ENCODE measurements at regions of chr5 and their contacts with region 1.

Region 1: GRCh38 chr5:157743163-157744050 is at the start of gene LSM11:
- DNase-seq: peak; percentile 94
- H3K4me3 Mint-ChIP-seq: peak within 1 kb of the TSS; percentile 87
- H3K27ac Mint-ChIP-seq: peak within 1 kb of the TSS; percentile 55
- H3K4me1 Mint-ChIP-seq: peaks cover 43% of the 10 kb centered on the region
- H3K27me3 Mint-ChIP-seq: no peaks in the 10 kb centered on the region
- total RNA-seq, gene LSM11: 7.4 to 8.0 TPM

Region 2: DNA sequence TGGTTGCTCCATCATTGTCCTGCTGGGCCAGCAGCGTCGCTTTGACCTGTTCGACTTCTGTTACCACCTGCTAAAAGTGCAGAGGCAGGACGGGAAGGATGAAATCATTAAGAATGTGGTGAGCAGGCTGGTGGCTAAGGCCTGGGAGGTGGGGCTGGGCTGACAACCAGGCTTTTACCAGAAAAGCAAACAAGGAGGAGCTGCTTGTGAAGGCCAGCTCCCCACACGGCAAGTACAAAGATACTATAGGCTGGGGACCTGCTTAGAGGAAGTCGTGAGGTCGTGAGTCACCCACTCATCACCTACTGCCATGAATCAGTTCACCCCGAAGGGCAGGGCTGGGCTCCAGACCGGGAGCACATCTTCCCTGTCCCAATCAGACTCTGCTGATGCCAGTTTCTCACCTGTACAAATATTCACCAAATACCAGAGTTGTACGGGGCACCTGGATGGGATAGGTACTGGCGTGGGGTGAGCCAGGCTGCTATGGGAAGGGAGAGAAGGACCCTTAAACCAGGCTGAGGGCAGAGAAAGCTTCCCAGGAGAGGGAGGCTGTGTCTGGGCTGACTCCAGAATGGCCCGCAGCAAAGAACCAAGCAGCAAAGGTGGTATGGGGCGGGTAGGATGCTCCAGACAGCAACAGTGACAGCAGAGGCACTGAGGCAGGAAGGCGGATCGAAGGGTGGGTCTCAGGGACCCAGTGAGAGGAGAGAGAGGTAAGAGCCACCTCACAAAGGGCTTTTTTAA is 352.7 kb before region 1 on chr5:
- CTCF ChIA-PET with region 1: interaction called, 13 read pairs
- POLR2A ChIA-PET with region 1: interaction called, 4 read pairs
- intact Hi-C with region 1: no loop called
- DNase-seq: peak; percentile 91
- H3K4me3 Mint-ChIP-seq: peak overlapping the region; percentile 49
- H3K27ac Mint-ChIP-seq: peak overlapping the region; percentile 98
- H3K4me1 Mint-ChIP-seq: peaks cover 39% of the 10 kb centered on the region
- H3K27me3 Mint-ChIP-seq: no peaks in the 10 kb centered on the region

Region 3: DNA sequence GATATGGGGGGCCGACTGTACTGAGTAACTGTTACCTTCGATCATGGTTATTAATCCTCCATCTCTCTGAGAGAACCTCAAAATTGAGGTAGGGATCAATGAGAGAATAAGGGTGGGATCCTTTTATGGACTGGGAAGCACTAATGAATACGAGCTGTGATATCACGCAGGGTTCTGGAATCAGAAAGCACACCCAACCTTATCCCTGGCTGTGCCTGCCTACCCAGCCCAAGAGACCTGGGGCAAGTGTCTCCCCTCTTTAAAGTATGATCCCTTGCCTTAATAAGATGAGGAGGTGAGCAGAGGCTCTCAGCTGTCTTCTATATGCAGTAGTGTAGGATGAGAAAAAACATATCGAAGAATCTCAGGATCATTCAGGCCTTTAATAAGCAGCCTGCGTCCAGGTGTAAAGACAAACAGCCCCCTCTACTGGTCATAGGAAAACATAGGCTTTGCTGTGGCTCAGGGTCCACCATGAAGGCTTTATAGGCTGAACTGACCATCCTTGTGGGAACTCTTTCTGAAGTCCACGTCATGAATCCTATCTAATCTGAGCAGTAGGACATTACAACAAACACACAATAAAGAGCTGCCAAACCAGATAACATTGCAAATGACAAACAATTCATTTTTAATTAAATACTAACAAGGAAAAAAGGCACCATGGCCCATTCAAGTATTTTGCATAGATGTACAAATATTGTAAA is 266.6 kb before region 1 on chr5:
- CTCF ChIA-PET with region 1: interaction called, 11 read pairs
- POLR2A ChIA-PET with region 1: no interaction called
- intact Hi-C with region 1: loop called (anchors 5 kb)
- DNase-seq: peak; percentile 33
- H3K4me3 Mint-ChIP-seq: no peak overlapping the region
- H3K27ac Mint-ChIP-seq: peak overlapping the region; percentile 40
- H3K4me1 Mint-ChIP-seq: peaks cover 27% of the 10 kb centered on the region
- H3K27me3 Mint-ChIP-seq: no peaks in the 10 kb centered on the region

Region 4: DNA sequence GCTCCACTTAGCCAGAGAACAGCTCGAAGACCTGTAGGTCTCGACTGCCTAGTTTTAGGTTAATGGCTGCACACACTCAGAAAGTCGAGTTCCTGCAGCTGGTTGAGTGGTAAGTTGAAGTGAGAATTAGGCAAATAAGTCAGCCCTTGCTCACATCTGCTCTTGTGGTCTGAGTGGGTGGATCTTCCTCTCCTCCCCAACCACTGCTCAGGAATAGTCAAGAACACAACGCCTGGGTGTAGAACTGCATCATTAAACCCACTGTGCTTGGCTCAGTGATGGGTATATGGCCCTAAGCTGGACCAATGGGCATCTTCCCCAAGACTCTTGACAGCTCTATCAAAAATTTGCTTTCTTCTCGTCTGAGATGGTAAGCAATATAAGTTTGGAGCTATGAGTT is 146.9 kb before region 1 on chr5:
- CTCF ChIA-PET with region 1: interaction called, 7 read pairs
- POLR2A ChIA-PET with region 1: interaction called, 3 read pairs
- intact Hi-C with region 1: loop called (anchors 2 kb)
- DNase-seq: peak; percentile 83
- H3K4me3 Mint-ChIP-seq: peak overlapping the region; percentile 11
- H3K27ac Mint-ChIP-seq: peak overlapping the region; percentile 91
- H3K4me1 Mint-ChIP-seq: peaks cover 95% of the 10 kb centered on the region
- H3K27me3 Mint-ChIP-seq: no peaks in the 10 kb centered on the region

Region 5: DNA sequence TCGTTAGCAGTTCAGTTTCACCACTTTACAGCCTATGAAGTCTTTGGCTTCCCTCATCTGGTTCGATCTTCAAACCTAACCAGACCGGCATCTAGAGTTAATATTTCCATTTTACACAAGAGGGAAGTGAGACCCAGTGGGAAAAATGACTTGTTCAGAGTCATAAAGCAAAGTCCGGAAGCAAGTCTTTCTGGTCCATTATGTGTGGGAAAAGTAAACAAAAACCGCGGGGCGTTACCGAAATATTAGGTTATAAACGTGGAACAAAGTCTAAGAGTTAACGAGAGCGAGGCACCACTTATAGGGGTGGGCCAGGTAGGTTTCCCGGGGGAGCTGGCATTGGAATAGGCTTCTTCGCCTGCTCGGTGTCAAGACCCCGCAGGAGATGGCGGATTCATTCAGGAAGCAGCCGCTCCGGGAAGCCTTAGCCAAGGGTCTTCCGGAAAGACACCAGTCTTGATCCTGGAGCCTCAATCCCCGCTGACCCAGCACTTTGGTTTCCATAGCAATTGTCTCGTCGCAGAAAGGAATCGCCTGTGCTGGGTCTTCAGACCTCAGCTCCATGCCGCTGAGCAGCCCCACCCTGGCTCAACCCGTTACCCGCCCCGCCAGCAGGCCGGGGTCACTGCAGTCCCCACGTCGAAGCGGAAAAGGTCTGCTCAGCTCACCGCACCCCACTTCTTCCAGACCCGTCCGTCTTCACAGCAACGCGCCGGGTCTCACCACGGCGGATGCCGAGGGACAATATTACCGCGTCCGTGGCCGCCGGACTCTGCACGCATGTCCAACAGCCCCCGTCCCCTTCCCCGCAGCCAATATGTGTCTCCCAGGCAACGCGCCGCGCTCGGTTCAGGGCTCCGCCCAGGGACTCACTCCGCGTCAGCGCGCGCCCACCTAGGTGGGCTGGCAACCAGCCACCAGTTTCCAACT is 72.5 kb before region 1 on chr5 and contains the start of gene C5orf52:
- CTCF ChIA-PET with region 1: interaction called, 57 read pairs
- POLR2A ChIA-PET with region 1: no interaction called
- intact Hi-C with region 1: loop called (anchors 1 kb)
- DNase-seq: peak; percentile 39
- H3K4me3 Mint-ChIP-seq: peak within 1 kb of the TSS; percentile 77
- H3K27ac Mint-ChIP-seq: peak within 1 kb of the TSS; percentile 47
- H3K4me1 Mint-ChIP-seq: peaks cover 20% of the 10 kb centered on the region
- H3K27me3 Mint-ChIP-seq: peaks cover 5% of the 10 kb centered on the region
- total RNA-seq, gene C5orf52: not detected